Naive thymus-derived CD4-positive, alpha-beta T cell (primary cell): ENCODE measurements at regions of chr1 and their contacts with region 1.

Region 1: DNA sequence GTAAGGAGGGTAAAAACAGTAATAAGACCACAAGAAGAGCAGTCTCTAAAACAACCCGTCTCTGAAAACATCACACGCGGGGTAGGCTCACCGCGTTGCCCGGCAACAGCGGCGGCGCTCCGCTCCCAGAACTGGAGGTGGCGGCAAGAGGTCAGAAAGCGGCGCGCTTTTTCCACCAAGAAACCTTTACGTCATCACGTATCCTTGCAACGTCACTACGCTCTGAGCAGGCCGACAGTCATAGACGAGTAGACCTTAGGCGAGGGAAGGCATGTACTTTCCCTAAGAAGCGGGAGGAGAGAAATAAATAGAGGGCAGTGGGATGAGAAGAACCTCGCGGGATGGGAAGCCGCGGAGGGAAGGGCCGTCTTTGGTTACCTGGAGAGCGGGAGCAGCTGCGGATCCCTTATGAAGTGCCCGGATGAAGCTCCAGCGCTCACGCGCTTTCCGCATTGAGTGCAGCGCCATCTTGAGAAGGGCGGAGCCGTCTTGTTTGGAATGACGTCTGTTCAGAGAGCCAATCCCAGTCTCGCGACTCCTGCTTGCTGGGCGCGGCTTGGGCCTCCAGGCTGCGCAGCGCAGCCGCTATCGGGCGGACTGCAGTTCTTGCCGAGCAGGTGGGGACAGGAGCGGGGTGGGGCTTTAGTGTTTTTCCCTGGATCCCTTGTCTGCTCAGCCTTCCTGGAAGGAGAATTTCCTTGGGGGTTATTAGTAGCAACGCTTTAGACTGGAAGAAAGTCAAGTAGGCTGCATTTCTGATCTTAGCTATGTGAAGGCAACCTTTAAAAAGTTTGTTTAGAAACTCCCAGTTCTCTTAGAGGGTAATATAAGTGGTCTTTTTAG is at the start of gene WARS2:
- DNase-seq: peak; percentile 78 to 97 (median 97)
- ATAC-seq: peak; percentile 93
- H3K4me3 ChIP-seq: peak within 1 kb of the TSS; percentile 97
- H3K4me3 Mint-ChIP-seq: no peak within 1 kb of the TSS
- H3K27ac ChIP-seq: peak within 1 kb of the TSS; percentile 98
- H3K27ac Mint-ChIP-seq: no peak within 1 kb of the TSS
- H3K4me1 ChIP-seq: peaks cover 12 to 25% of the 10 kb centered on the region in 2 donors
- H3K4me1 Mint-ChIP-seq: peaks cover 17 to 38% (median 27%) of the 10 kb centered on the region in 7 donors
- H3K27me3 ChIP-seq: no peaks in the 10 kb centered on the region
- H3K27me3 Mint-ChIP-seq: no peaks in the 10 kb centered on the region
- total RNA-seq, gene WARS2: 8.6 to 27.1 (median 12.9) TPM

Region 2: GRCh38 chr1:117929173-117929989 is 1211.0 kb before region 1 on chr1 and contains the starts of genes GDAP2 and WDR3:
- CTCF ChIA-PET with region 1: no interaction called
- POLR2A ChIA-PET with region 1: interaction called, 3 read pairs
- intact Hi-C with region 1: loop called (anchors 1 to 5 kb)
- DNase-seq: peak; percentile 84 to 98 (median 94)
- ATAC-seq: peak; percentile 96
- H3K4me3 ChIP-seq: peak within 1 kb of the TSS; percentile 94
- H3K4me3 Mint-ChIP-seq: peak within 1 kb of the TSS; percentile 90 to 97 (median 94)
- H3K27ac ChIP-seq: peak within 1 kb of the TSS; percentile 89
- H3K27ac Mint-ChIP-seq: peak within 1 kb of the TSS; percentile 74 to 97 (median 94)
- H3K4me1 ChIP-seq: peaks cover 24 to 30% of the 10 kb centered on the region in 2 donors
- H3K4me1 Mint-ChIP-seq: peaks cover 41 to 79% (median 71%) of the 10 kb centered on the region in 7 donors
- H3K27me3 ChIP-seq: no peaks in the 10 kb centered on the region
- H3K27me3 Mint-ChIP-seq: peaks cover 0 to 2% (median 0%) of the 10 kb centered on the region in 5 donors
- total RNA-seq, gene GDAP2: 22.3 to 31.2 (median 25.2) TPM
- total RNA-seq, gene WDR3: 12.2 to 34.6 (median 30.0) TPM

Region 3: GRCh38 chr1:118767971-118768370 is 372.4 kb before region 1 on chr1:
- CTCF ChIA-PET with region 1: no interaction called
- POLR2A ChIA-PET with region 1: no interaction called
- intact Hi-C with region 1: no loop called
- DNase-seq: no peak
- ATAC-seq: no peak
- H3K4me3 ChIP-seq: no peak overlapping the region
- H3K4me3 Mint-ChIP-seq: no peak overlapping the region
- H3K27ac ChIP-seq: no peak overlapping the region
- H3K27ac Mint-ChIP-seq: no peak overlapping the region
- H3K4me1 ChIP-seq: no peaks in the 10 kb centered on the region
- H3K4me1 Mint-ChIP-seq: peaks cover 0 to 1% (median 0%) of the 10 kb centered on the region in 7 donors
- H3K27me3 ChIP-seq: no peaks in the 10 kb centered on the region
- H3K27me3 Mint-ChIP-seq: no peaks in the 10 kb centered on the region

Region 4: DNA sequence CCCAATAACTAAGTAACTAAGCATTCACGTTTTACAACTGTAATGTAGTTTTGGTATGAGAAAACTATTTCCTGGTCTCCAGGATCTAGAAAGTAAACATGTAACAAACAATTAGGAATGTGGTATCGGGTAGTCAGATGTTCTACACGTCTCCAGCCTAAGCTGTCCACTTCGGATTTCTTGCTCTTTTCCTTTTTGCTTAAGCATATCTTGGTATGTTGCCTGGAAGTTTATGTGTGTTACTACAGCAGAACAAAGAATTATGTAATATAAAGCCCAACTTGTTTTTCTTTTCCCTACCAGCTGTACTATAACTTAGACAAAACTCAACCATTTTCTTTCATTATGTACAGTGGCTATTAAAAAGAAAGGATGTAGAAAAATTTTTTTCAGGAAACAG is 20.5 kb after region 1 on chr1:
- CTCF ChIA-PET with region 1: no interaction called
- POLR2A ChIA-PET with region 1: no interaction called
- intact Hi-C with region 1: no loop called
- DNase-seq: no peak
- ATAC-seq: no peak
- H3K4me3 ChIP-seq: no peak overlapping the region
- H3K4me3 Mint-ChIP-seq: no peak overlapping the region
- H3K27ac ChIP-seq: no peak overlapping the region
- H3K27ac Mint-ChIP-seq: no peak overlapping the region
- H3K4me1 ChIP-seq: no peaks in the 10 kb centered on the region
- H3K4me1 Mint-ChIP-seq: peaks cover 0 to 5% (median 2%) of the 10 kb centered on the region in 7 donors
- H3K27me3 ChIP-seq: no peaks in the 10 kb centered on the region
- H3K27me3 Mint-ChIP-seq: no peaks in the 10 kb centered on the region

Region 5: GRCh38 chr1:119179051-119179450 is 38.7 kb after region 1 on chr1:
- CTCF ChIA-PET with region 1: no interaction called
- POLR2A ChIA-PET with region 1: no interaction called
- intact Hi-C with region 1: no loop called
- DNase-seq: no peak
- ATAC-seq: no peak
- H3K4me3 ChIP-seq: no peak overlapping the region
- H3K4me3 Mint-ChIP-seq: no peak overlapping the region
- H3K27ac ChIP-seq: no peak overlapping the region
- H3K27ac Mint-ChIP-seq: no peak overlapping the region
- H3K4me1 ChIP-seq: no peaks in the 10 kb centered on the region
- H3K4me1 Mint-ChIP-seq: peaks cover 0 to 2% (median 0%) of the 10 kb centered on the region in 7 donors
- H3K27me3 ChIP-seq: no peaks in the 10 kb centered on the region
- H3K27me3 Mint-ChIP-seq: no peaks in the 10 kb centered on the region

Region 6: GRCh38 chr1:119275145-119276134 is 135.0 kb after region 1 on chr1:
- CTCF ChIA-PET with region 1: no interaction called
- POLR2A ChIA-PET with region 1: no interaction called
- intact Hi-C with region 1: loop called in 1 of 2 experiments (anchors 1 kb)
- DNase-seq: peak in 6 of 9 donors; percentile 21 to 43 (median 24)
- ATAC-seq: peak; percentile 59
- H3K4me3 ChIP-seq: no peak overlapping the region
- H3K4me3 Mint-ChIP-seq: no peak overlapping the region
- H3K27ac ChIP-seq: no peak overlapping the region
- H3K27ac Mint-ChIP-seq: no peak overlapping the region
- H3K4me1 ChIP-seq: no peaks in the 10 kb centered on the region
- H3K4me1 Mint-ChIP-seq: peaks cover 0 to 2% (median 0%) of the 10 kb centered on the region in 7 donors
- H3K27me3 ChIP-seq: no peaks in the 10 kb centered on the region
- H3K27me3 Mint-ChIP-seq: peaks cover 3 to 23% (median 10%) of the 10 kb centered on the region in 5 donors

Region 7: GRCh38 chr1:119327436-119328155 is 187.2 kb after region 1 on chr1:
- CTCF ChIA-PET with region 1: no interaction called
- POLR2A ChIA-PET with region 1: no interaction called
- intact Hi-C with region 1: loop called in 1 of 2 experiments (anchors 2 kb)
- DNase-seq: peak in 6 of 9 donors; percentile 8 to 27 (median 24)
- ATAC-seq: peak; percentile 56
- H3K4me3 ChIP-seq: peak overlapping the region; percentile 61
- H3K4me3 Mint-ChIP-seq: peak overlapping the region; percentile 82 to 94 (median 89)
- H3K27ac ChIP-seq: no peak overlapping the region
- H3K27ac Mint-ChIP-seq: peak overlapping the region in 3 of 9 donors; percentile 22 to 24 (median 22)
- H3K4me1 ChIP-seq: peaks cover 0 to 7% of the 10 kb centered on the region in 2 donors
- H3K4me1 Mint-ChIP-seq: peaks cover 9 to 21% (median 15%) of the 10 kb centered on the region in 7 donors
- H3K27me3 ChIP-seq: no peaks in the 10 kb centered on the region
- H3K27me3 Mint-ChIP-seq: peaks cover 4 to 15% (median 10%) of the 10 kb centered on the region in 5 donors